Lower leg skin (tissue), 4 donors: ENCODE measurements at regions of chr4 and their contacts with region 1.

Region 1: GRCh38 chr4:167435786-167436185 is 201.5 kb upstream of the SPOCK3 start:
- DNase-seq: no peak
- H3K4me3 ChIP-seq: no peak overlapping the region
- CTCF ChIP-seq: no peak
- POLR2A ChIP-seq: no peak

Region 2: DNA sequence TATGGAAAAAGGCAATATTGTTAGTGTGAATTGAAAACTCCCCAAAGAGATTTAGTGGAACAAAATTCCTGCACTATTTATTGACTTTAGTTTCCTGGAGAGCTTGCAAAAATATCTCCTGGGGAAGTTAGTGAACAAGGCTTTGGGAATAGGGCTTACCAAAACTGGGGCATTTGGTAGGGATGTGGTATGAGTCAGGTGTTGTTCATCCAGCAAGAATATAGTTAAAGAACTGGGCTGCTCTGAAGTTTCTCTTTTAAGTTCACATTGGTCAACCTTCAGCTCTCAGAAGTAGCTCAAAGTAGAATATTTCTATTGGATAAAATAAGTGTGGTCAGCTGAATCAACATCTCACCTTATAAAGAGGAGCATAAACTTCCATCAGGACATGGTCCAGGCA is 1871.9 kb before region 1 on chr4:
- intact Hi-C with region 1: loop called (anchors 10 kb)
- DNase-seq: no peak
- H3K4me3 ChIP-seq: no peak overlapping the region
- CTCF ChIP-seq: no peak
- POLR2A ChIP-seq: no peak

Region 3: GRCh38 chr4:166882221-166882620 is 553.6 kb before region 1 on chr4:
- intact Hi-C with region 1: no loop called
- DNase-seq: no peak
- H3K4me3 ChIP-seq: no peak overlapping the region
- CTCF ChIP-seq: no peak
- POLR2A ChIP-seq: no peak

Region 4: GRCh38 chr4:168723020-168723419 is 1287.2 kb after region 1 on chr4:
- intact Hi-C with region 1: no loop called
- DNase-seq: no peak
- H3K4me3 ChIP-seq: no peak overlapping the region
- CTCF ChIP-seq: no peak
- POLR2A ChIP-seq: no peak

Region 5: DNA sequence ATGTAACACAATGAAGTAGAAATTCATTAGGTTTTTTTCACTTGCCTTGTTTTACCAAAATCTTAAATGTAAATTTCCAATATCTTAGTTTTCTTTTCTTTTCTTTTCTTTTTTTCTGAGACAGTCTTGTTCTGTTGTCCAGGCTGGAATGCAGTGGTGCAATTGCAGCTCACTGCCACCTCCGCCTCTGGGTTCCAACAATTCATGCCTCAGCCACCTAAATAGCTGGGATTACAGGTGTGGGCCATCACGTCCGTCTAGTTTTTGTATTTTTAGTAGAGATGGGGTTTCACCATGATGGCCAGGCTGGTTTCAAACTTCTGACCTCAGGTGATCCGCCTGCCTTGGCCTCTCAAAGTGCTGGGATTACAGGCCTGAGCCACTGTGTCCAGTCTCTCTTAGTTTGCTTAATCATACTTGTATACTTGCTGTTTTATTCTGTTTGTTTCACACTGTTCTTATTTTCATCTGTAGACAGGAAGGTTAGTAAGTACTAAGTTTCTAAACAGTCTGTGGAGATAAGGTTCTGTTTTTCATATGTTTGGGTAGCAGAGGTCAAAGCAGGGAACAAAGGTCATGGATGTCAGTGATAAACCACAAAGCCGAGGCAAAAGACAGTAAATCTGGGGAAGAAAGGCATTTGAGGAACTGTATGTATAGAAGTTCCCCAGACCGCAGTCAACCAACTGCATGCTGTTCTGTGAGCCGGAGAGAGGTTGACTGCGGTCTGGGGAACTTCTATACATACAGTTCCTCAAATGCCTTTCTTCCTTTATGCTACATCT is 1445.2 kb after region 1 on chr4:
- intact Hi-C with region 1: no loop called
- DNase-seq: no peak
- H3K4me3 ChIP-seq: no peak overlapping the region
- CTCF ChIP-seq: no peak
- POLR2A ChIP-seq: no peak